AG04450 (cell line): ENCODE measurements at regions of chr20 and their contacts with region 1.

Region 1: DNA sequence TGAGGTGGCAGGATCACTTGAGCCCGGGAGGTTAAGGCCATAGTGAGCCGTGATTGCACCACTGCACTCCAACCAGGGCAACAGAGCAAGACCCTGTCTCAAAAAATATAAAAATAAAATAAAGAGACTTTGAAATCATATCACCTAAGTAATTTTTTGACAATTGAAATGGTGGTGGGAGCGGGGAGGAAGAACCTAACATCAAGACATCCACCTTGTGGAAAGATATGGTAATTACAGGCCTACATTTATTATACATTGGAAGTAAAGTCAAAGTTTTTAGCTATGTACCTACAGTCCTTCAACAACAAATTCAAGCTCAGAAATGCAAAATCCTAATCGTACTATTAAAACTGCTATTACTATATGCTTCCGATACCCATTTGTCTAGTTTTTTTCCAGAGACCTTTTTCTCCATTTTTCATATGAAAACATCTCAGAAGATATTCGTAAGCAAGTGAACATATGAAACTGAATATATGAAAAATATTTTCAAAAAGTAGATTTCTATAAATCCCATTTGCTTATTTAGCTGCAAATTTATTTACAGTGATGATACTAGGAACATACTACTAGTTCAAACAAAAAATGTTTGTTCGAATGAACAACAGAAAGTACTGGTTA is 83.3 kb downstream of the SYCP2 start:
- DNase-seq: no peak
- H3K4me3 ChIP-seq: no peak overlapping the region
- H3K27ac ChIP-seq: no peak overlapping the region
- H3K27me3 ChIP-seq: no peaks in the 10 kb centered on the region
- CTCF ChIP-seq: peak; percentile 63

Region 2: DNA sequence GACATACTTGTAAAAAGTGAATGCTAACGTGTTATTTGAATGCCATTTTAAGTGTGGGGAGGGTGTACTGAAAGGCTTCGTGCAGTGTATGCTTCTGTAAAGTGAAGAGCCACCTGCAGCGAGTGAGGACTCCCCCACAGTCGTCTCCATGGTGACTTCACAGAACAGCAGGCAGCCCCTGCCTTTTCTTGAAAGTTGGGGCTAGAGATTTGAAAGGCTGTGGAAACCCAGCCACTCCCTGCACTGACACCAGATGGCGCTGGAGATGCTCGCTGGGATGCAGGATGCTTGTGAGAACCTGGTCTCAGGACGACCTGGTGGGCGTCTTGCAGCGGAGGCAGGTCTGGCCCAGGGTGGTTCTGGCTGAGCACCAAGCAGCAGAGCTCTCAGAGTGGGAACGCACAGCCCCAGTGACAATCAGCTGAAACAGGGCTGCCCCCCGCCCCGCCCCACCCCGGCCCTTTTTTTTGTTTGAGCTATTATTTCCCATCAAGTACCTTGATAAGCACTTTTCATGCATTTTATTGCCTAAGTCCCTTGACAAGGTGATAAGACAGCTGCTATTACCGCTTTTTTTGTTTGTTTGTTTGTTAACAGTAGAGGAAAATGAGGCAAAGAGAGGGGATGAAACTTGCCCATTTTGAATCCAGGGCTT is 67.0 kb before region 1 on chr20:
- CTCF ChIA-PET with region 1: interaction called, 16 read pairs
- POLR2A ChIA-PET with region 1: no interaction called
- DNase-seq: no peak
- H3K4me3 ChIP-seq: no peak overlapping the region
- H3K27ac ChIP-seq: no peak overlapping the region
- H3K27me3 ChIP-seq: no peaks in the 10 kb centered on the region
- CTCF ChIP-seq: peak; percentile 76